Activated T-helper 1 cell treated with anti-CD3 and anti-CD28 coated beads, Interleukin-12 subunit alpha, Interleukin-12 subunit beta, Interleukin-2, Interleukin-4 antibody, amounts not matched to agents 30 ng/mL and 10 ng/mL and 1 ng/mL, durations not matched to agents 14 hours and 24 hours and 36 hours (primary cell): ENCODE measurements at regions of chr6 and their contacts with region 1.

Region 1: DNA sequence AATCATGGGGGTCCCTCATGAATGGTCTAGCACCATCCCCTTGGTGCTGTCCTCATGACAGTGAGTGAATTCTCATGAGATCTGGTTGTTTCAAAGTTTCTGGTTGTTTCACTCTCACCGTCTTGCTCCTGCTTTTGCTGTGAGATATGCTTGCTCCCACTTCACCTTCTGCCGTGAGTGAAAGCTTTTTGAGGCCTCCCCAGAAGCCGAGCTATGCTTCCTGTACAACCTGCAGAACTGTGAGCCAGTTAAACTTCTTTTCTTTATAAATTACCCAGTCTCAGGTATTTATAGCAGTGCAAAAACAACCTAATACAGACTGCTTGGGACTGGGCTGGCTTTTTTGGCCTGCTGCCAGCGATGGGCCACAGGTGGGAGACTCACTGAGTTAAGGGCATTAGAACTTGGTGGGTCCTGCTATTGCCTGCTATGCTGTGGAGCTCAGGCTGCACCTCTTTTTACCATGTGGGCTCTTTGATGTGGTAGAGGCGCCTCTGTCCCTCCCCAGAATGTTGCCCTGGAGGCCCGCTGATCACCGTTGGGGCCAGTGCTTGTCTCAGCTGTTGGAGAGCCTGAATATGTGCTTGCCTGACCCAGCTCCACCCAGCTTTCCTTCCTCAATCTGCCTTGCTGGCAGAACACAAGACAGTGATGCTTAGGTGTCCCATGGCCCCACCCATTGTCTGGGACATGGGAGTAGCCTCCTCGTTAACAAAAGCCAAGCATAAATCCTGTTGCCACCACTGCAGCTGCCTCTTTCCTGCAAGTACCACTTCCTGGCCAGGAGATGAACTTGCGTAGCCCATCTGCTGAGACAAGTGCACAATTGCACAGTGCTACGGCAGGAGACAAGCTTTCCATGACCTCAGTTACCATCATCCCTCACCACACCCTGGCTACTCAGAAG is 47.1 kb downstream of the IGF2R start:
- DNase-seq: peak; percentile 64
- H3K4me3 Mint-ChIP-seq: peak overlapping the region; percentile 75
- H3K27ac Mint-ChIP-seq: peak overlapping the region; percentile 98
- H3K4me1 Mint-ChIP-seq: peaks cover 86% of the 10 kb centered on the region
- H3K27me3 Mint-ChIP-seq: no peaks in the 10 kb centered on the region

Region 2: GRCh38 chr6:159968440-159969203 is 47.4 kb before region 1 on chr6 and contains the start of gene IGF2R:
- intact Hi-C with region 1: loop called (anchors 1 kb)
- DNase-seq: peak; percentile 90
- H3K4me3 Mint-ChIP-seq: peak within 1 kb of the TSS; percentile 96
- H3K27ac Mint-ChIP-seq: peak within 1 kb of the TSS; percentile 93
- H3K4me1 Mint-ChIP-seq: peaks cover 34% of the 10 kb centered on the region
- H3K27me3 Mint-ChIP-seq: peaks cover 17% of the 10 kb centered on the region
- total RNA-seq, gene IGF2R: 118 and 126 TPM in 2 replicates

Region 3: DNA sequence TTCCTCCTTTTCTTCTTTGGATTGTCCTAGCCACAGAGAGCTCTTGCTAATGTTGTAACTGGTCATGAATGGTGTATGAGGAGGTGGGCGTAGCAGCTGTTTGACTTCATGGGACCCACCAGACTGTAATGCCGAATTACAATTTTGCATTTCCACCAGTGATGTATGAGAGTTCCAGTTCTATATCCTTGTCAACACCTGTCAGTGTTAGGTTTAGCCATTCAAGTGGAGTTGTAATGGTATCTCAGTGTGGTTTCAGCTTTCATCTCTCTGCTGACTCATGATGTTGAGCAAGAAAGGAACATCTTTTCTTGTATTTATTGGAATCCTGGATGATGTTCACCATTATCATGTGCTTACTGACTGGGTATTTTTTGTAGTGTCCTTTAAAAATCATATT is 42.1 kb before region 1 on chr6:
- intact Hi-C with region 1: loop called (anchors 1 kb)
- DNase-seq: no peak
- H3K4me3 Mint-ChIP-seq: peak overlapping the region; percentile 77
- H3K27ac Mint-ChIP-seq: peak overlapping the region; percentile 96
- H3K4me1 Mint-ChIP-seq: peaks cover 86% of the 10 kb centered on the region
- H3K27me3 Mint-ChIP-seq: peaks cover 2% of the 10 kb centered on the region

Region 4: DNA sequence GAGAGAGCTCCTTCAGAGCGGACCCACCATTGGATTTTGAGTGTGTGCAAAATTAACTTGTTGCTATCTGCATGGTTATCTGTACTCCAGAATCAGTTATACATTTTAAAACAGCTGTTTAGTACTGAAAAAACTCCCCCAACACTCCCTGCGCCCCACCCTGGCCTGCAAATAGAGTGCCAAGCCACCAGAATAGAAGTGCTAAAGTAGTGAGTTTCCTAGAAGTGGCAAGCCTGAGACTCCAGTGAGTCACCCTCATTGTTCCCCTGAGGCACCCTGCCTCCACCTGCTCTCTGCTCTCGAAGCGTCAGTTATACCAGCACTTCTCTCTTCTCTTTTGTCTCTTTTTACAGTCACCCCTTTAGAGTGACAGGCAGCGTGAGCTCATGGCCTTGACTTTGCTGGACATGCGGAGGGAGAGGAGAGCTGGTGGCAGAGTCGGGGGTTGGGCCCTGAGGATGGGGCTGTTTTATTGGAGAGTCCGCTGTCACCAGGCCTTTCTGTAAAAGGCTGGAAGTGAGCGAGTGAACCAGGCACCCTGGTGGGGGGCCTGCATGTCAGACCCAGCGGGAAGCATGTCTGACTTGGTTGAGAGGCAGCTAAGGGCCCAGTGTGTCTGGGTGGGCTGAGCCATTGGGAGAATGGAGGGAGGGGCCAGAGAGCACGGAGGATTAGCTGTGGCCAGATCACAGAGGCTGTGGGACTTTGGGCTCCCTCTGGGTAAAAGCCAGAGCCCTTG is 36.7 kb before region 1 on chr6:
- intact Hi-C with region 1: loop called (anchors 1 kb)
- DNase-seq: peak; percentile 58
- H3K4me3 Mint-ChIP-seq: peak overlapping the region; percentile 86
- H3K27ac Mint-ChIP-seq: peak overlapping the region; percentile 97
- H3K4me1 Mint-ChIP-seq: peaks cover 89% of the 10 kb centered on the region
- H3K27me3 Mint-ChIP-seq: no peaks in the 10 kb centered on the region

Region 5: DNA sequence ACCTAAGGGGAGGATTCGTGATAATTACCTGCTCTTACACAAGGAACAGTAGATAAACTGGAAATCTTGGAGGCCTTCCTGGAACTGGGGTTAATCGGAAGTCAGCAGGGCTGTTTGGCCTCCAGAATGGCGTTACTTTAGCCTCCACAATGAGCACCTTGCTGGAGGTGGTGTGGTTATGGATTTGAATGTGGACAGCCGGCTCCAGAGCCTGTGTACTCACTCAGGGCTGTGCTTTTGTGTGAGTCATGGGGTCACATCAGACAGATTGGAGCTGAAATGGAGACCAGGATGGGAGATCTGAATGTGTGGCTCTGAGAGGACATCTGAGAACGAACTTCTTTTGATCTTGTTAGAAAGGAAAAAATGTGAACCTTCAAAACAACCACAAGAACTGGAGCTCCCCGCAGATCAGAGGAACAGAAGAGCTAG is 16.8 kb before region 1 on chr6:
- intact Hi-C with region 1: loop called (anchors 2 kb)
- DNase-seq: no peak
- H3K4me3 Mint-ChIP-seq: no peak overlapping the region
- H3K27ac Mint-ChIP-seq: peak overlapping the region; percentile 69
- H3K4me1 Mint-ChIP-seq: peaks cover 66% of the 10 kb centered on the region
- H3K27me3 Mint-ChIP-seq: no peaks in the 10 kb centered on the region

Region 6: DNA sequence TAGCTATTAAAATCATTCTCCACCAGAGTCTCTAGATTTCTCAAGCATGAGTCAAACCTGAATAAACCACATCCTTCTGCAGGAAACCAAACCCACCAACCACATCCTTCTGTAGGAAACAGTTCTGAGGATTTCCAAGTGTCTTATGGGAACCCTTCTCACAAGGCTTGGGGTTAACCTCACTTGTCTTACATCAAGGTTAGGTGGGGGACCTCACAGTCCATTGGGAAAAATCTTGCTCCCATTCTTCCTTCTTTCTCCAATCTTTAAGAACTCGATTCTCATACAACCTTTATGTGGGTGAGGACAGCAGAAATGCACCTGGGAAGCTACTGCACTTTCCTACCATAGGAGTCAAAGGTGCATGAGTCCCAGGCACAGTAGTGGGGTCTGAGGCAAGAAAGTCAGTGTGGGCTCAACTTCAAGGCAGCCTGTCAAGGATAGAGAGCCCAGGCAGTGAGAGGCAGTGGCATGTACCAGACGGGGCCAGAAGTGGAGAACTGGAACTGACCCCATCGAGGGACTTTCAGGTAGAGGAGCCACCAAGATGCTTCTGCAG is 446.6 kb after region 1 on chr6:
- intact Hi-C with region 1: loop called (anchors 1 kb)
- DNase-seq: peak; percentile 76
- H3K4me3 Mint-ChIP-seq: peak overlapping the region; percentile 34
- H3K27ac Mint-ChIP-seq: peak overlapping the region; percentile 71
- H3K4me1 Mint-ChIP-seq: peaks cover 79% of the 10 kb centered on the region
- H3K27me3 Mint-ChIP-seq: peaks cover 14% of the 10 kb centered on the region

Region 7: GRCh38 chr6:161101517-161101916 is 1085.5 kb after region 1 on chr6:
- intact Hi-C with region 1: no loop called
- DNase-seq: no peak
- H3K4me3 Mint-ChIP-seq: no peak overlapping the region
- H3K27ac Mint-ChIP-seq: no peak overlapping the region
- H3K4me1 Mint-ChIP-seq: peaks cover 10% of the 10 kb centered on the region
- H3K27me3 Mint-ChIP-seq: no peaks in the 10 kb centered on the region